Activated CD4-positive, alpha-beta memory T cell treated with anti-CD3 and anti-CD28 coated beads for 36 hours (primary cell): ENCODE measurements at regions of chr4 and their contacts with region 1.

Region 1: GRCh38 chr4:3047464-3048286 is 26.7 kb downstream of the HTT-AS start:
- DNase-seq: peak; percentile 93
- H3K4me3 Mint-ChIP-seq: peak overlapping the region; percentile 68
- H3K27ac Mint-ChIP-seq: peak overlapping the region; percentile 79
- H3K4me1 Mint-ChIP-seq: peaks cover 38% of the 10 kb centered on the region
- H3K27me3 Mint-ChIP-seq: peaks cover 2% of the 10 kb centered on the region

Region 2: GRCh38 chr4:2761035-2761923 is 286.4 kb before region 1 on chr4:
- CTCF ChIA-PET with region 1: no interaction called
- POLR2A ChIA-PET with region 1: no interaction called
- intact Hi-C with region 1: loop called (anchors 10 kb)
- DNase-seq: peak; percentile 51
- H3K4me3 Mint-ChIP-seq: no peak overlapping the region
- H3K27ac Mint-ChIP-seq: no peak overlapping the region
- H3K4me1 Mint-ChIP-seq: peaks cover 9% of the 10 kb centered on the region
- H3K27me3 Mint-ChIP-seq: no peaks in the 10 kb centered on the region

Region 3: GRCh38 chr4:3031357-3032082 is 16.2 kb before region 1 on chr4:
- CTCF ChIA-PET with region 1: no interaction called
- POLR2A ChIA-PET with region 1: no interaction called
- intact Hi-C with region 1: no loop called
- DNase-seq: no peak
- H3K4me3 Mint-ChIP-seq: no peak overlapping the region
- H3K27ac Mint-ChIP-seq: no peak overlapping the region
- H3K4me1 Mint-ChIP-seq: no peaks in the 10 kb centered on the region
- H3K27me3 Mint-ChIP-seq: no peaks in the 10 kb centered on the region

Region 4: GRCh38 chr4:3074078-3074795 is 26.6 kb after region 1 on chr4 and contains the starts of genes HTT and HTT-AS:
- CTCF ChIA-PET with region 1: no interaction called
- POLR2A ChIA-PET with region 1: no interaction called
- intact Hi-C with region 1: loop called (anchors 1 kb)
- DNase-seq: peak; percentile 98
- H3K4me3 Mint-ChIP-seq: peak within 1 kb of the TSS; percentile 89
- H3K27ac Mint-ChIP-seq: peak within 1 kb of the TSS; percentile 88
- H3K4me1 Mint-ChIP-seq: peaks cover 24% of the 10 kb centered on the region
- H3K27me3 Mint-ChIP-seq: no peaks in the 10 kb centered on the region
- total RNA-seq, gene HTT: 57.6 to 69.8 TPM
- total RNA-seq, gene HTT-AS: not detected

Region 5: GRCh38 chr4:3106339-3107186 is 58.9 kb after region 1 on chr4:
- CTCF ChIA-PET with region 1: no interaction called
- POLR2A ChIA-PET with region 1: no interaction called
- intact Hi-C with region 1: loop called (anchors 1 kb)
- DNase-seq: peak; percentile 96
- H3K4me3 Mint-ChIP-seq: no peak overlapping the region
- H3K27ac Mint-ChIP-seq: peak overlapping the region; percentile 42
- H3K4me1 Mint-ChIP-seq: peaks cover 12% of the 10 kb centered on the region
- H3K27me3 Mint-ChIP-seq: no peaks in the 10 kb centered on the region

Region 6: GRCh38 chr4:3442959-3443749 is 395.5 kb after region 1 on chr4:
- CTCF ChIA-PET with region 1: no interaction called
- POLR2A ChIA-PET with region 1: no interaction called
- intact Hi-C with region 1: loop called (anchors 5 kb)
- DNase-seq: peak; percentile 75
- H3K4me3 Mint-ChIP-seq: no peak overlapping the region
- H3K27ac Mint-ChIP-seq: no peak overlapping the region
- H3K4me1 Mint-ChIP-seq: no peaks in the 10 kb centered on the region
- H3K27me3 Mint-ChIP-seq: no peaks in the 10 kb centered on the region